BJ (cell line): ENCODE measurements at regions of chr11 and their contacts with region 1.

Region 1: GRCh38 chr11:131910523-131911387 is 540.3 kb downstream of the NTM start:
- DNase-seq: no peak
- H3K4me3 ChIP-seq: peak overlapping the region; percentile 76
- H3K27me3 ChIP-seq: no peaks in the 10 kb centered on the region
- CTCF ChIP-seq: no peak

Region 2: GRCh38 chr11:131867457-131868257 is 43.1 kb before region 1 on chr11:
- CTCF ChIA-PET with region 1: interaction called, 151 read pairs
- POLR2A ChIA-PET with region 1: no interaction called
- DNase-seq: peak; percentile 18
- H3K4me3 ChIP-seq: no peak overlapping the region
- H3K27me3 ChIP-seq: no peaks in the 10 kb centered on the region
- CTCF ChIP-seq: peak; percentile 94

Region 3: GRCh38 chr11:131899950-131900580 is 10.7 kb before region 1 on chr11:
- CTCF ChIA-PET with region 1: interaction called, 16 read pairs
- POLR2A ChIA-PET with region 1: no interaction called
- DNase-seq: no peak
- H3K4me3 ChIP-seq: no peak overlapping the region
- H3K27me3 ChIP-seq: no peaks in the 10 kb centered on the region
- CTCF ChIP-seq: no peak

Region 4: DNA sequence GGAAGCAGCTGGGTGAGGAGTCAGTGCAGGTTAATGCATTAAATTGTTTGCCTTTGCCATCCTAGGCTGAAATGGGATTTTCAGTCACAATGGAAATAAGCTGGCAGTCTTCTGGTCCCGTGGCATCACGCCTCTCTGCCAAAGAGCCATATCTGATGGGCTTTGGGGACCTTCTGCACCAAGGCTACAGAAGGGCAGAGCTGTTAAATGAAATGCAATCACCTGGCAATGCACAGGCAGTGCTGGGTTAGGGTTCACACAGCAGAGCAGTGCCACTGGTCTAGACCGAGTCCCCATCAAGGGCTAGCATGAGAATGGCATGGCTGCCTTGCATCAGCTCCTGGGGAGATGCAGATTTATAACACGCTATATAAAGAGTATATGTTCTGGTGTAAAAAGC is 208.8 kb after region 1 on chr11:
- CTCF ChIA-PET with region 1: interaction called, 10 read pairs
- POLR2A ChIA-PET with region 1: no interaction called
- DNase-seq: no peak
- H3K4me3 ChIP-seq: no peak overlapping the region
- H3K27me3 ChIP-seq: no peaks in the 10 kb centered on the region
- CTCF ChIP-seq: no peak